Mucosa of descending colon (tissue), 3 donors: ENCODE measurements at regions of chr13 and their contacts with region 1.

Region 1: GRCh38 chr13:111559612-111560403 is 239.4 kb downstream of the TEX29 start:
- DNase-seq: no peak
- ATAC-seq: no peak
- H3K4me3 ChIP-seq: no peak overlapping the region
- H3K4me1 ChIP-seq: no peaks in the 10 kb centered on the region
- CTCF ChIP-seq: no peak

Region 2: DNA sequence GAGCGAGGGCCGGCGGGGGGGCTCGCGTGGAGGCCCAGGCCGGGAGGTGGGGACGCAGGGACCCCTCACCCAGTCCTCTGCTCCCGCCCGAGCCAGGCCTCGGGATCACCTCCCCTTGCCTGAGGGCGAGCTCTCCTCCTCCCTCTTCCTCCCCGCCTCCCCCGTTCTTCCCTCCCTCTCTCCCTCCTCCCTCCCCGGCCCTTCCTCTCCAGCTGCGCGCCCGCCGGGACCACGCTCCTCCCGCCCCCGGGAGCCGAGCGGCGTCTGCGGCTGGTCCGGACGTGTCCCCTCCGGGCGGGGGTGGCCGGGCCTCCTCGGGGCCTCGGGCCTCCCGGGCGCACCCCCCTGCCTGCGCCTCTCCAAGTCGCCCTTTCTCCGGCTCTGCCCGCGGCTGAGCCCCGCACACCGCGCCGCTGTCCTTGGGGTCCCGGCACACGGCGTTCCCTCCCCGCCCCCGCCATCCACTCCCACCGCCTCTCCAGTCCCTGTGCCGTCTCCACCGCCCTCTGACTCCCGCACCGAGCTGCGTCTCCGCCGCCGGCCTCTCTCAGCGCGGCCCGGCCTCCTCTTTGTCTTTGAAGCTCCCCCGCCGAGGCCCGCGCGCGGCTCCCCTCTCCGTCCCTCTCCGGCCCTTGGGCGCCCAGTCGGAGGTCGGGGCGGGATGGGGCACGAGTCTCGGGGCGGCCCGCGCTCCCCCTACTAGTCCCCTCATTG is 512.9 kb after region 1 on chr13:
- intact Hi-C with region 1: loop called in 1 of 2 experiments (anchors 10 kb)
- DNase-seq: no peak
- ATAC-seq: no peak
- H3K4me3 ChIP-seq: no peak overlapping the region
- H3K4me1 ChIP-seq: peaks cover 2% of the 10 kb centered on the region
- CTCF ChIP-seq: no peak